HAP-1 (cell line): ENCODE measurements at regions of chr10 and their contacts with region 1.

Region 1: DNA sequence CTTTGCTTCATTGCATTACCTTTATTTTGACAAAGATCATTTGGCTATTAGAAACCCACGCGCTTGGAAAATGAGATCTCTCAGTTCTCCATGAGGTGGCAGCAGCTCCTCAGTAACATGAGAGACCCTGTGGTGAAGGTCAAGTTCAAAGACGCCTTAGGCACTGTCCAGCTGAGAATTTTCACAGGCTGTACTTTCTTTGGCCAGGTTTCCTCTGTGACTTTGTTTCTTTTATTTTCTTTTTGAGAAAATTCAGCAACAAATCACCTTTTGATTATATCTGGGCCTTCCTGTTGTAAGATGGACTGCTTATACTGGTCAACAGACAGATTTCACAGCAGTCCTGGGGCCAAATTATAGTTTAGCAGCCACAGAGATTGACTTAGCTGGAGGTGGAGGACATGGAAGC is 54.5 kb downstream of the RAB18 start:
- DNase-seq: peak; percentile 53 to 74
- H3K4me3 ChIP-seq: no peak overlapping the region
- H3K4me1 ChIP-seq: no peaks in the 10 kb centered on the region
- H3K27me3 ChIP-seq: no peaks in the 10 kb centered on the region

Region 2: DNA sequence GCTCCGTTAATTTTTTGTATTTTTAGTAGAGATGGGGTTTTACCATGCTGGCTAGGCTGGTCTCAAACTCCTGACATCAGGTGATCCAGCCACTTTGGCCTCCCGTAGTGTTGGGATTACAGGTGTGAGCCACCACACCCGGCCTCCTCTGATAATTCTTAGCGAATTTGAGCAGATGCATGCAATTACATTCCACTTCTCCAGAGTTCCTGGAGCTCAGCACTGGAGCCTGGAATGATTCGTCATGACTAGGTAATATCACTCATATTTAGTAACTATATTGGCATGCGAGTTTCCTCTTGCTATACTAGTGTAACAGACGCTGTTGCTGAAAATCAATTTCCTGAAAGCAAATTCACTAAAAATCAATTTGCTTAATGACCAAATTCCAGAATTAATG is 100.2 kb after region 1 on chr10:
- in situ Hi-C with region 1: loop called (anchors 10 kb)
- DNase-seq: no peak
- H3K4me3 ChIP-seq: no peak overlapping the region
- H3K4me1 ChIP-seq: no peaks in the 10 kb centered on the region
- H3K27me3 ChIP-seq: no peaks in the 10 kb centered on the region

Region 3: GRCh38 chr10:27699776-27700175 is 141.2 kb after region 1 on chr10:
- in situ Hi-C with region 1: no loop called
- DNase-seq: peak in 1 of 2 experiments; percentile 42
- H3K4me3 ChIP-seq: no peak overlapping the region
- H3K4me1 ChIP-seq: peaks cover 32% of the 10 kb centered on the region
- H3K27me3 ChIP-seq: no peaks in the 10 kb centered on the region

Region 4: GRCh38 chr10:28179006-28179742 is 620.6 kb after region 1 on chr10:
- in situ Hi-C with region 1: loop called (anchors 25 kb)
- DNase-seq: peak; percentile 53
- H3K4me3 ChIP-seq: no peak overlapping the region
- H3K4me1 ChIP-seq: no peaks in the 10 kb centered on the region
- H3K27me3 ChIP-seq: no peaks in the 10 kb centered on the region

Region 5: DNA sequence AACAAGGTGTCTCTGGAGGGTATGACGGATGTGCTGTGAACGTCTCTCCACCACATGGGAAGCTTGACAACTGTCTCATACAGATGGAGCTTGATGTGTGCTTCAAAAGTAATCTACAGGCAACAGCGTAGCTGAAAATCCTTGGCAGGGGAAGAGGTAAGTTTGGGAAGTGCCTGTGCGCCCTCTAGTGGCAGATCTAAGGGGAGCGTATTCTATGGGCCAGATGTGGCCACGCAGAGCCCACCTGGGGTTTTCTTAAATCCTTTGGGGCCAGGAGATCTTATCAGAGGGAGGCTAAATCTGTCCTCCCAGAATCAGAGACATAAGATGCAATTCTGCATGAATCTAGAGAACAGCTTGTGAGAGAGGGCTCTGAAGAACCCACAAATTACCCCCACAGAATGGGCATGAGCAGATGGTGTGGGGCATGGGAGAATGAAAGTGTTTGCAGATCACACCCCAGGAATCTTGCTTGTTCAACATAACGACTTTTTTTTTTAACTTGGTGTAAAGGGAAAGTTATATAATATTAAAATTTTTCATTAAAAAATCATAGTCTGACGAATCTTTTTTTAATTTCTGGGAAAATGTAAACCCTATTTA is 835.5 kb after region 1 on chr10:
- in situ Hi-C with region 1: loop called (anchors 10 kb)
- DNase-seq: peak; percentile 61 to 80
- H3K4me3 ChIP-seq: no peak overlapping the region
- H3K4me1 ChIP-seq: no peaks in the 10 kb centered on the region
- H3K27me3 ChIP-seq: peaks cover 6% of the 10 kb centered on the region; the same call in 1 of the 2 replicates